Heart left ventricle (tissue), 16 donors: ENCODE measurements at regions of chr5 and their contacts with region 1.

Region 1: DNA sequence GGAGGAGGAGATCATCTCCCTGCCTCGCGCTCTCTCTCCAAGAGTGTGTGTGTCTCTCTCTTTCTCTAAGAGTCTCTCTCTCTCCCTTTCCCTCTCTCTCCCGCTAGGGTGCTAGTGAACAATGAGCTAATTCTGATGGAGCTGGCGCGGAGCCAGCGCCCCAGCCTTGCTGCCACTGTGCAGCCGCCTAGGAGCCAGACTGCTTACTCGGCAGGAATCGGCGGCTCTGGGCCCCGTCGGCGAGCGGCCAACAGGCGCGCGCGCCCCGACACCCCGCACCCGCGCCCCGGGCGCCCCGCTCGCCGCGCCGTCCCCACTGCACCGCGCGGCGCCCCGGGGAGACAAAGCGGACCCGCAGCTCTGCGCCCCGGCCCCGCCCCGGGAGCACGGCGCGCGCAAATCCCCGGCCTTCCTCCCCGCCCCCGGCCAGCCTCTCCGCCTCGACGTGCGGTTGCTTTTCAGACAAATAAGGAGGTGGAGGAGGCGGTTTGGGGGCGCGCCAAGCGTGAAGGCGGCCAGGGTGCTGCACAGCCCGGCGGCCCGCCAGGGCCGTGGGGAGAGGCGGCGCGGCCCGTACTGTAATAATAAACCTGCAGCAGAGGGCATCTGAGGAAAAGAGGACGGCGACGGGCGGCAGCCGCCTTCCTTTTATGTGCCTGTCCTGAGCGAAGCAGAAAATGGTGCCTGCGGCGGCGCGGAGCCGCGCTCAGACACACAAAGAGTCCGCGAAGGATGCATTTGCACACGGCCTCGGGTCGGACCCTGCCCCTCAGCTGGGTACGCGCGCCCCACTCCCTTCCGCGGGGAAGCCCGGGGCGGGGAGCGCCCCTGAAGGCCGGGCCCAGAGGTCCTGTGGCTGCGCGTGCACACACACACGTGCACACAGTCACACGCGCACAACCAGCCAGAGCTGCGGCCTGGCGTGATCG is 625 bp upstream of the NREP start:
- DNase-seq: peak; percentile 97 to 98 (median 97)
- ATAC-seq: peak; percentile 85 to 93 (median 90)
- H3K4me3 ChIP-seq: peak overlapping the region; percentile 48 to 89 (median 70)
- H3K27ac ChIP-seq: peak overlapping the region; percentile 85 to 98 (median 92)
- H3K4me1 ChIP-seq: peaks cover 0 to 42% (median 29%) of the 10 kb centered on the region in 12 donors
- H3K27me3 ChIP-seq: no peaks in the 10 kb centered on the region
- CTCF ChIP-seq: peak in 7 of 12 donors; percentile 30 to 52 (median 45)
- POLR2A ChIP-seq: no peak

Region 2: GRCh38 chr5:111530298-111530740 is 227.3 kb before region 1 on chr5:
- intact Hi-C with region 1: loop called in 1 of 10 experiments (anchors 5 kb)
- DNase-seq: peak; percentile 80 to 88 (median 81)
- ATAC-seq: peak; percentile 91 to 100 (median 98)
- H3K4me3 ChIP-seq: no peak overlapping the region
- H3K27ac ChIP-seq: peak overlapping the region in 11 of 12 donors; percentile 22 to 82 (median 57)
- H3K4me1 ChIP-seq: peaks cover 0 to 51% (median 0%) of the 10 kb centered on the region in 12 donors
- H3K27me3 ChIP-seq: no peaks in the 10 kb centered on the region
- CTCF ChIP-seq: no peak
- POLR2A ChIP-seq: no peak

Region 3: DNA sequence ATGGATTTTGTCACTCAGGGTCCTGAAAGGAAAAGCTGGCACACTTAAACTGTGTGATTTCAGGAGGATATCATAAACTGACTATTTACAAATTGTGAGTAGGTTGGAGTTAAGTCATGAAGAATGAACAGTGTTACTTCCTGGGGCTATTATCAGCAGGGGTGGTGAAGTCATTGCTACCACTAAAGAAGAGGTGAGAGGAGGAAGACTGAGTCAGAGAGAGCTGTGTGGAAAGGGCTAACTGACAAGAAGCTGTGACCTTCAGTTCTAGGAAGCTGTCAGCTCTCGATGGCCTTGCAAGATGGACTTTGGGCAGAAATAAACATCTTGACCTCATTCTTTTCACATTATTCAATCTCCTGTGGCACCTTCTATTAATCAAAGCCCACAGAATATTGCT is 173.0 kb before region 1 on chr5:
- intact Hi-C with region 1: loop called in 1 of 10 experiments (anchors 5 kb)
- DNase-seq: no peak
- ATAC-seq: peak in 3 of 4 donors; percentile 44 to 74 (median 47)
- H3K4me3 ChIP-seq: no peak overlapping the region
- H3K27ac ChIP-seq: no peak overlapping the region
- H3K4me1 ChIP-seq: peaks cover 0 to 37% (median 12%) of the 10 kb centered on the region in 12 donors
- H3K27me3 ChIP-seq: no peaks in the 10 kb centered on the region
- CTCF ChIP-seq: no peak
- POLR2A ChIP-seq: no peak

Region 4: GRCh38 chr5:111853748-111854147 is 96.1 kb after region 1 on chr5:
- intact Hi-C with region 1: loop called in 2 of 10 experiments (anchors 5 to 10 kb)
- DNase-seq: peak in 3 of 5 donors; percentile 9 to 26 (median 18)
- ATAC-seq: peak in 2 of 4 donors; percentile 51 to 60
- H3K4me3 ChIP-seq: no peak overlapping the region
- H3K27ac ChIP-seq: no peak overlapping the region
- H3K4me1 ChIP-seq: peaks cover 0 to 37% (median 12%) of the 10 kb centered on the region in 12 donors
- H3K27me3 ChIP-seq: no peaks in the 10 kb centered on the region
- CTCF ChIP-seq: no peak
- POLR2A ChIP-seq: no peak